Activated CD4-positive, alpha-beta memory T cell treated with anti-CD3 and anti-CD28 coated beads for 36 hours (primary cell): ENCODE measurements at regions of chr4 and their contacts with region 1.

Region 1: GRCh38 chr4:163681208-163681821 is 186.8 kb downstream of the TMA16 start:
- DNase-seq: no peak
- H3K4me3 Mint-ChIP-seq: no peak overlapping the region
- H3K27ac Mint-ChIP-seq: no peak overlapping the region
- H3K4me1 Mint-ChIP-seq: no peaks in the 10 kb centered on the region
- H3K27me3 Mint-ChIP-seq: no peaks in the 10 kb centered on the region

Region 2: GRCh38 chr4:162347842-162348213 is 1333.5 kb before region 1 on chr4:
- CTCF ChIA-PET with region 1: no interaction called
- POLR2A ChIA-PET with region 1: no interaction called
- intact Hi-C with region 1: no loop called
- DNase-seq: no peak
- H3K4me3 Mint-ChIP-seq: no peak overlapping the region
- H3K27ac Mint-ChIP-seq: no peak overlapping the region
- H3K4me1 Mint-ChIP-seq: no peaks in the 10 kb centered on the region
- H3K27me3 Mint-ChIP-seq: no peaks in the 10 kb centered on the region

Region 3: DNA sequence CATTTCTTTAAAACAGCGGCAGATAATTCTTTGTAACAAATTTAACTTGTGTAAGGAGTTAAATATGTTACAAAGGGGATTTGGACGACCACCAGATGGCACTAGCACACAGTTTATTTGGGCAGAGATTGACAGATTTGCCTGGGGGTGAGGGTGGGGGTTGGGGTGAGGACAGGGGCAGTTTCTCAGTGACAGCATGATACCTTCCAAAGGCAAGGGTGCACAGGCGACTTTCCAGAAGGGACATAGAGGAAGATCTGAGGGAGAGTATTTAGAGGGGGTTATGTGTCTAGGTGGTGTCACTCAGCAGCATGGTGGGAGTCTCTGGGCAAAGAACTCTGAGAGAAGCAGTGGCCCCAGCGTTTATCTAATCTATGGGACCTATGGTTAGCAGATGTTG is 196.4 kb before region 1 on chr4:
- CTCF ChIA-PET with region 1: no interaction called
- POLR2A ChIA-PET with region 1: no interaction called
- intact Hi-C with region 1: loop called (anchors 2 kb)
- DNase-seq: peak; percentile 60
- H3K4me3 Mint-ChIP-seq: no peak overlapping the region
- H3K27ac Mint-ChIP-seq: no peak overlapping the region
- H3K4me1 Mint-ChIP-seq: peaks cover 1% of the 10 kb centered on the region
- H3K27me3 Mint-ChIP-seq: peaks cover 4% of the 10 kb centered on the region

Region 4: DNA sequence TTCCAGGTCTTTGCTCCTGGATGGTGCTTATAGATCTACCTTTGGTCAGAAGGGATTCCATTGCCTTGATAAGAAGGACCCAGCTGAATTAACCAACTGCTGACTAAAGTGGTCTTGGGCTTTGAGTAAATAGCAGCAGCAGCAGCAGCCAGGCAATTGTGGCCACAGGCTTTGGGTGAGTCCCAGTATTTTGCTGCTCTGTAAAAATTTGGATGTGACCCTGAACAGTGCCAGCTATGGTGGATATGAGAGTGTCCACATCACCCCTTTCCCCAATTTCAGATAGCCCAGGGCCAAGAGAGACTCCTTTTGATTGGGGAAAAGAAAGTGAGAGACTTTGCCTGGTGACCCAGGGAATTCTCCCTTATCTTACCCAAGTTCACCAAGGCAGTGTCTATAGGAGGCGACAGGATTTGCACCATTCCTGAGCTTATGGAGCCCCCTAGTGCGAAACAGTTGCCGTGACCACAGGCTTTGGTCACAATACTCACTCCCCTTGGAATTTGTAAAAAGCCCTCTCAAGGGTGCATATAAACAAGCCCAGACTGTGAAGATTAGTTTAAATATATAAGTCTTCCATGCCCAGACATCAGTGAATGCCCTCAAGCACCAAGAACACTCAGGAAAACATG is 331.2 kb after region 1 on chr4:
- CTCF ChIA-PET with region 1: no interaction called
- POLR2A ChIA-PET with region 1: no interaction called
- intact Hi-C with region 1: loop called (anchors 10 kb)
- DNase-seq: peak; percentile 29
- H3K4me3 Mint-ChIP-seq: no peak overlapping the region
- H3K27ac Mint-ChIP-seq: no peak overlapping the region
- H3K4me1 Mint-ChIP-seq: peaks cover 7% of the 10 kb centered on the region
- H3K27me3 Mint-ChIP-seq: no peaks in the 10 kb centered on the region

Region 5: GRCh38 chr4:164731827-164732474 is 1050.6 kb after region 1 on chr4:
- CTCF ChIA-PET with region 1: no interaction called
- POLR2A ChIA-PET with region 1: no interaction called
- intact Hi-C with region 1: loop called (anchors 5 kb)
- DNase-seq: peak; percentile 63
- H3K4me3 Mint-ChIP-seq: no peak overlapping the region
- H3K27ac Mint-ChIP-seq: no peak overlapping the region
- H3K4me1 Mint-ChIP-seq: no peaks in the 10 kb centered on the region
- H3K27me3 Mint-ChIP-seq: peaks cover 6% of the 10 kb centered on the region